Activated CD4-positive, alpha-beta T cell treated with anti-CD3 and anti-CD28 coated beads, Interleukin-2, amount 10 ng/mL, durations not matched to agents 7 days and 5 days (primary cell): ENCODE measurements at regions of chr16 and their contacts with region 1.

Region 1: DNA sequence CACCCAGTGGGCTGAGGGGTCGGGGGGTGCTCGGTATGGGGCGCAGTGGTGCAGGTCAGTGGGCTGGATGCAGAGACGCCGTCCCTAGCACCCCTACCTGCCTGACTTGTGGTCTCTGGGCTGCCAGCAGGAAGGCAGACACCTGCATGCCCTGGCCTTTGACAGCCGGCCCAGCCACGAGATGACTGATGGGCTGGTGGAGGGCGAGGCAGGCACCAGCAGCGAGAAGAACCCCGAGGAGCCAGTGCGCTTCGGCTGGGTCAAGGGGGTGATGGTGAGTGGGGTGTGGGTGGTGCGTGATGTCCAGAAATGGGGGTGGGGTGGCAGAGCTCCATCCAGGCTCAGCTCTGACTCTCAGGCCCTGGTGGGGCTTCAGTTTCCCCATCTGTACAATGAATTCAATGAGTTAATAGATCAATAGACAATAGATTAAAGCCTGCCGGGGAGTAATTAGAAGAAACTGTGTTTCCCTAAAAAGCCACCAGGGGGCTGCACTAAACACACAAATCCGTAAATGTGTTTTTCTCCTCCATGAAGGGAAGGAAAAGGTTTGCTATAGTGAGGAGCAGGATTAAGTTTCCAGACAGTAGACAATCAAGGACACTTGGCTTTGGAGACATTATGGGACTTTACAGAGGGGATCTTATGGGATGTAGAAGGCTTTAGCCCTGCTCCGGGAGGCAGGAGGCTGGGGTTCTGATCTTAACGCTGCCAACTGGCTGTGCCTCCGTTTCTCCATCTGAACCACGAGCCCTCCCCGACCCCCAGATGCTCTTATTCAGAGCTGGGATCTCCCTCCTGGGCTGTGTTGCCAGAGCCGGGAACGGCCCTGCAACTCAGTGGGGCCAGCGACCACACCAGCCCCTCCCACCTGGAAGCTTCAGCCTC is 2.2 kb downstream of the SLC12A3 start:
- DNase-seq: peak; percentile 62
- H3K4me3 Mint-ChIP-seq: no peak overlapping the region
- H3K27ac Mint-ChIP-seq: no peak overlapping the region
- H3K4me1 Mint-ChIP-seq: peaks cover 14% of the 10 kb centered on the region
- H3K27me3 Mint-ChIP-seq: no peaks in the 10 kb centered on the region

Region 2: GRCh38 chr16:56851671-56852400 is 15.4 kb before region 1 on chr16:
- CTCF ChIA-PET with region 1: interaction called, 23 read pairs
- POLR2A ChIA-PET with region 1: interaction called, 6 read pairs
- DNase-seq: no peak
- H3K4me3 Mint-ChIP-seq: no peak overlapping the region
- H3K27ac Mint-ChIP-seq: no peak overlapping the region
- H3K4me1 Mint-ChIP-seq: peaks cover 23% of the 10 kb centered on the region
- H3K27me3 Mint-ChIP-seq: no peaks in the 10 kb centered on the region

Region 3: GRCh38 chr16:56856876-56857447 is 10.2 kb before region 1 on chr16:
- CTCF ChIA-PET with region 1: interaction called, 23 read pairs
- POLR2A ChIA-PET with region 1: interaction called, 6 read pairs
- DNase-seq: no peak
- H3K4me3 Mint-ChIP-seq: no peak overlapping the region
- H3K27ac Mint-ChIP-seq: no peak overlapping the region
- H3K4me1 Mint-ChIP-seq: peaks cover 30% of the 10 kb centered on the region
- H3K27me3 Mint-ChIP-seq: no peaks in the 10 kb centered on the region

Region 4: GRCh38 chr16:56911771-56912571 is 44.8 kb after region 1 on chr16:
- CTCF ChIA-PET with region 1: no interaction called
- POLR2A ChIA-PET with region 1: no interaction called
- DNase-seq: no peak
- H3K4me3 Mint-ChIP-seq: no peak overlapping the region
- H3K27ac Mint-ChIP-seq: no peak overlapping the region
- H3K4me1 Mint-ChIP-seq: peaks cover 29% of the 10 kb centered on the region
- H3K27me3 Mint-ChIP-seq: peaks cover 10% of the 10 kb centered on the region

Region 5: DNA sequence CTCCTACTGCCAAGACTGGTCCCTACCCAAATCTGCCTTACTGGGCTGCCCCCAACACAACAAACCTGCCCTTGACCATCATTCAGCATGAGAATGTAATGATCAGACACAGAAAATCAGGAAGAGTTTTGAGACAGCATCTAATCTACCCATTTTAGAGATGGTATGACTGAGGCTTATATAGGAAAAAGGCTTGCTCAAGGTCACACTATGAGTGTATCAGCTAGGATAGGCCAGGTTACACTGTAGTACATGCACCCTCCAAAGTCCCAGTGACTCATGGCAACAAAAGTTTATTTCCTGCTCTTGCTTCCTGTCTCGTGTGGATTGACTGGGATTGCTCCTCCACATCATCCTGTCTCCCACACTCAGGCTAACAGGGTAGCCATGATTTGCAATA is 150.1 kb after region 1 on chr16:
- CTCF ChIA-PET with region 1: no interaction called
- POLR2A ChIA-PET with region 1: no interaction called
- DNase-seq: no peak
- H3K4me3 Mint-ChIP-seq: no peak overlapping the region
- H3K27ac Mint-ChIP-seq: peak overlapping the region; percentile 7
- H3K4me1 Mint-ChIP-seq: peaks cover 86% of the 10 kb centered on the region
- H3K27me3 Mint-ChIP-seq: no peaks in the 10 kb centered on the region